CD8-positive, alpha-beta T cell (primary cell): ENCODE measurements at regions of chr4 and their contacts with region 1.

Region 1: GRCh38 chr4:64911846-64912245 is 502.6 kb upstream of the TECRL start:
- DNase-seq: no peak
- ATAC-seq: no peak
- H3K4me3 ChIP-seq: no peak overlapping the region
- H3K4me3 Mint-ChIP-seq: no peak overlapping the region
- H3K27ac ChIP-seq: no peak overlapping the region
- H3K27ac Mint-ChIP-seq: no peak overlapping the region
- H3K4me1 ChIP-seq: no peaks in the 10 kb centered on the region
- H3K4me1 Mint-ChIP-seq: no peaks in the 10 kb centered on the region
- H3K27me3 ChIP-seq: no peaks in the 10 kb centered on the region
- H3K27me3 Mint-ChIP-seq: no peaks in the 10 kb centered on the region
- CTCF ChIP-seq: no peak

Region 2: DNA sequence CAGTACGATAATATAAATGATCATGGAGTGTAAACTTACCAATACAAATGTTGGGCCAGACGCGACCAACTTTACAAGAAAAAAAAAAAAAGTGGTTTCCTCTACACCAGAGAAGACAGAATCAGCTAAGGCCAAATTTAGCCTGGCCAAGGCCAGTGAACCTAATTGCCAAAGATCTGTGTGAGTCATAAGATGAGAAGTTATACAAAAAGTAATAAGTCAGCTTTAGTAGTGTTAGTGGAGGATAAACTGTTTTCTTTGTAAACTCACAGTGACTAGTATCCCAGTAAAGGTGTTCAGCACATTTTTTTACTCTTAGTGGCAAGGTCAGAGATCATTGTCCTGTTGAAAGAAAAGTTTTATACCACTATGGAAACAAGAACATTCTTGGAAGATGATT is 28.9 kb after region 1 on chr4:
- CTCF ChIA-PET with region 1: no interaction called
- POLR2A ChIA-PET with region 1: no interaction called
- intact Hi-C with region 1: loop called in 1 of 2 experiments (anchors 2 kb)
- DNase-seq: no peak
- ATAC-seq: no peak
- H3K4me3 ChIP-seq: no peak overlapping the region
- H3K4me3 Mint-ChIP-seq: no peak overlapping the region
- H3K27ac ChIP-seq: no peak overlapping the region
- H3K27ac Mint-ChIP-seq: no peak overlapping the region
- H3K4me1 ChIP-seq: no peaks in the 10 kb centered on the region
- H3K4me1 Mint-ChIP-seq: no peaks in the 10 kb centered on the region
- H3K27me3 ChIP-seq: no peaks in the 10 kb centered on the region
- H3K27me3 Mint-ChIP-seq: no peaks in the 10 kb centered on the region
- CTCF ChIP-seq: no peak

Region 3: GRCh38 chr4:65046192-65047101 is 134.6 kb after region 1 on chr4:
- CTCF ChIA-PET with region 1: no interaction called
- POLR2A ChIA-PET with region 1: no interaction called
- intact Hi-C with region 1: no loop called
- DNase-seq: no peak
- ATAC-seq: no peak
- H3K4me3 ChIP-seq: no peak overlapping the region
- H3K4me3 Mint-ChIP-seq: no peak overlapping the region
- H3K27ac ChIP-seq: no peak overlapping the region
- H3K27ac Mint-ChIP-seq: no peak overlapping the region
- H3K4me1 ChIP-seq: no peaks in the 10 kb centered on the region
- H3K4me1 Mint-ChIP-seq: no peaks in the 10 kb centered on the region
- H3K27me3 ChIP-seq: no peaks in the 10 kb centered on the region
- H3K27me3 Mint-ChIP-seq: no peaks in the 10 kb centered on the region
- CTCF ChIP-seq: no peak

Region 4: GRCh38 chr4:65296246-65296645 is 384.4 kb after region 1 on chr4:
- CTCF ChIA-PET with region 1: no interaction called
- POLR2A ChIA-PET with region 1: no interaction called
- intact Hi-C with region 1: no loop called
- DNase-seq: no peak
- ATAC-seq: no peak
- H3K4me3 ChIP-seq: no peak overlapping the region
- H3K4me3 Mint-ChIP-seq: no peak overlapping the region
- H3K27ac ChIP-seq: no peak overlapping the region
- H3K27ac Mint-ChIP-seq: no peak overlapping the region
- H3K4me1 ChIP-seq: no peaks in the 10 kb centered on the region
- H3K4me1 Mint-ChIP-seq: no peaks in the 10 kb centered on the region
- H3K27me3 ChIP-seq: no peaks in the 10 kb centered on the region
- H3K27me3 Mint-ChIP-seq: no peaks in the 10 kb centered on the region
- CTCF ChIP-seq: no peak